Tibial artery (tissue), 4 donors: ENCODE measurements at regions of chr2 and their contacts with region 1.

Region 1: GRCh38 chr2:123853161-123853560 is 171.9 kb upstream of the CNTNAP5 start:
- DNase-seq: no peak
- H3K4me3 ChIP-seq: no peak overlapping the region
- H3K27ac ChIP-seq: no peak overlapping the region
- H3K4me1 ChIP-seq: no peaks in the 10 kb centered on the region
- H3K27me3 ChIP-seq: no peaks in the 10 kb centered on the region
- CTCF ChIP-seq: no peak

Region 2: GRCh38 chr2:121949271-121949670 is 1903.9 kb before region 1 on chr2:
- intact Hi-C with region 1: loop called (anchors 5 kb)
- DNase-seq: no peak
- H3K4me3 ChIP-seq: no peak overlapping the region
- H3K27ac ChIP-seq: no peak overlapping the region
- H3K4me1 ChIP-seq: peaks cover 0 to 3% (median 0%) of the 10 kb centered on the region in 4 donors
- H3K27me3 ChIP-seq: peaks cover 0 to 3% of the 10 kb centered on the region in 2 donors
- CTCF ChIP-seq: no peak

Region 3: DNA sequence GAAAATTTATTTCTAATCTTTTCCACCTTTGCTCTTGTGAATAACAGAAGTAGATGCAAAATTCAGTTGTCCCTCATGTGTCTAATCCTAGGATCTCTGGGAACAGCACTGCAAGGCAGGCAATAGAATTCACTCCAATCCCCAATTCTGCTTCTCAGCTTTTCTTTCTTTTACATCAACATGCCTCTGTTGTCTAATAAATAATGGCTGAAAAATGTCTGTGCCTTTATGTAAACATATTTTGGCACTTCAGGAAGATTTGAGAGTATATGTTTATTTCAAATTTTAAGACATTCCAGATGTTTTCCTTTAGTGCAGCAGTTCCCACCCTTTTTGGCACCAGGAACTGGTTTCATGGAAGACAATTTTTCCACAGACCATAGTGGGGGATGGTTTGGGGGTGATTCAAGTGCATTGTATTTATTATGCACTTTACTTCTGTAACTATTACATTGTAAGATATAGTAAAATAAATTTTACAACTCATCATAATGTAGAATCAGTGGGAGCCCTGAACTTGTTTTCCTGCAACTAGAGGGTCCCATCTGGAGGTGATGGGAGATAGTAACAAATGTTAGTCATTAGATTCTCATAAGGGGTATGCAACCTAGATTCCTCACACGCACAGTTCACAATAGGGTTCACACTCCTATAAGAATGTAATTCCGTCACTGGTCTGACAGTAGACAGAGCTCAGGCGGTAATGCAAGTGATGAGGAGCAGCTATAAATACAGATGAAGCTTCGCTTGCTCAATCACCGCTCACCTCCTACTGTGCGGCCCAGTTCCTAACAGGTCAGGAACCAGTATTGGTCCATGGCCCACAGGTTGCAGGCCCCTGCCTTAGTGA is 418.4 kb before region 1 on chr2:
- intact Hi-C with region 1: no loop called
- DNase-seq: no peak
- H3K4me3 ChIP-seq: no peak overlapping the region
- H3K27ac ChIP-seq: no peak overlapping the region
- H3K4me1 ChIP-seq: no peaks in the 10 kb centered on the region
- H3K27me3 ChIP-seq: no peaks in the 10 kb centered on the region
- CTCF ChIP-seq: no peak